GM12878 (cell line): ENCODE measurements at regions of chr3 and their contacts with region 1.

Region 1: GRCh38 chr3:138051946-138052802 is 42.2 kb downstream of the CLDN18 start:
- DNase-seq: no peak
- ATAC-seq: peak; percentile 96
- H3K4me3 ChIP-seq: no peak overlapping the region
- H3K27ac ChIP-seq: no peak overlapping the region
- H3K4me1 ChIP-seq: peaks cover 7% of the 10 kb centered on the region; the same call in 1 of the 2 replicates
- H3K27me3 ChIP-seq: no peaks in the 10 kb centered on the region
- CTCF ChIP-seq: peak; percentile 78 to 93 (median 83)
- EP300 ChIP-seq: no peak
- POLR2A ChIP-seq: no peak
- RAD21 ChIP-seq: peak; percentile 91

Region 2: GRCh38 chr3:137032465-137033120 is 1019.6 kb before region 1 on chr3:
- CTCF ChIA-PET with region 1: interaction called, 11 read pairs
- POLR2A ChIA-PET with region 1: no interaction called
- RAD21 ChIA-PET with region 1: interaction called, 3 read pairs
- SMC1A ChIA-PET with region 1: interaction called, 3 read pairs
- in situ Hi-C with region 1: no loop called
- intact Hi-C with region 1: no loop called
- DNase-seq: peak; percentile 13
- ATAC-seq: peak; percentile 97
- H3K4me3 ChIP-seq: peak overlapping the region; percentile 22; the same call in 1 of the 2 replicates
- H3K27ac ChIP-seq: no peak overlapping the region
- H3K4me1 ChIP-seq: no peaks in the 10 kb centered on the region
- H3K27me3 ChIP-seq: no peaks in the 10 kb centered on the region
- CTCF ChIP-seq: peak; percentile 96 to 100 (median 99)
- EP300 ChIP-seq: no peak
- POLR2A ChIP-seq: no peak
- RAD21 ChIP-seq: peak; percentile 95

Region 3: GRCh38 chr3:137110484-137110883 is 941.7 kb before region 1 on chr3:
- CTCF ChIA-PET with region 1: interaction called, 35 read pairs
- POLR2A ChIA-PET with region 1: no interaction called
- RAD21 ChIA-PET with region 1: interaction called, 22 read pairs
- SMC1A ChIA-PET with region 1: interaction called, 13 read pairs
- in situ Hi-C with region 1: no loop called
- intact Hi-C with region 1: loop called (anchors 1 kb)
- DNase-seq: no peak
- ATAC-seq: peak; percentile 85
- H3K4me3 ChIP-seq: no peak overlapping the region
- H3K27ac ChIP-seq: no peak overlapping the region
- H3K4me1 ChIP-seq: no peaks in the 10 kb centered on the region
- H3K27me3 ChIP-seq: no peaks in the 10 kb centered on the region; a peak in 1 of 4 replicates
- CTCF ChIP-seq: peak; percentile 68 to 89 (median 88)
- EP300 ChIP-seq: no peak
- POLR2A ChIP-seq: no peak
- RAD21 ChIP-seq: peak; percentile 95

Region 4: GRCh38 chr3:137714551-137714950 is 337.6 kb before region 1 on chr3:
- CTCF ChIA-PET with region 1: interaction called, 19 read pairs
- POLR2A ChIA-PET with region 1: no interaction called
- RAD21 ChIA-PET with region 1: interaction called, 18 read pairs
- SMC1A ChIA-PET with region 1: interaction called, 42 read pairs
- in situ Hi-C with region 1: loop called (anchors 10 kb)
- intact Hi-C with region 1: loop called (anchors 1 kb)
- DNase-seq: no peak
- ATAC-seq: no peak
- H3K4me3 ChIP-seq: no peak overlapping the region
- H3K27ac ChIP-seq: no peak overlapping the region
- H3K4me1 ChIP-seq: no peaks in the 10 kb centered on the region
- H3K27me3 ChIP-seq: no peaks in the 10 kb centered on the region; a peak in 1 of 4 replicates
- CTCF ChIP-seq: no peak
- EP300 ChIP-seq: no peak
- POLR2A ChIP-seq: no peak
- RAD21 ChIP-seq: no peak

Region 5: GRCh38 chr3:137906985-137907640 is 145.1 kb before region 1 on chr3:
- CTCF ChIA-PET with region 1: no interaction called
- POLR2A ChIA-PET with region 1: no interaction called
- RAD21 ChIA-PET with region 1: no interaction called
- SMC1A ChIA-PET with region 1: no interaction called
- in situ Hi-C with region 1: no loop called
- intact Hi-C with region 1: no loop called
- DNase-seq: no peak
- ATAC-seq: no peak
- H3K4me3 ChIP-seq: no peak overlapping the region
- H3K27ac ChIP-seq: no peak overlapping the region
- H3K4me1 ChIP-seq: no peaks in the 10 kb centered on the region
- H3K27me3 ChIP-seq: no peaks in the 10 kb centered on the region
- CTCF ChIP-seq: no peak
- EP300 ChIP-seq: no peak
- POLR2A ChIP-seq: no peak
- RAD21 ChIP-seq: no peak

Region 6: GRCh38 chr3:137946345-137946973 is 105.7 kb before region 1 on chr3:
- CTCF ChIA-PET with region 1: interaction called, 45 read pairs
- POLR2A ChIA-PET with region 1: no interaction called
- RAD21 ChIA-PET with region 1: interaction called, 23 read pairs
- SMC1A ChIA-PET with region 1: interaction called, 5 read pairs
- in situ Hi-C with region 1: no loop called
- intact Hi-C with region 1: loop called (anchors 1 kb)
- DNase-seq: no peak
- ATAC-seq: peak; percentile 93
- H3K4me3 ChIP-seq: no peak overlapping the region
- H3K27ac ChIP-seq: no peak overlapping the region
- H3K4me1 ChIP-seq: no peaks in the 10 kb centered on the region
- H3K27me3 ChIP-seq: no peaks in the 10 kb centered on the region
- CTCF ChIP-seq: peak; percentile 65 to 69 (median 68); a peak in 5 of 6 replicates
- EP300 ChIP-seq: no peak
- POLR2A ChIP-seq: no peak
- RAD21 ChIP-seq: peak; percentile 91

Region 7: DNA sequence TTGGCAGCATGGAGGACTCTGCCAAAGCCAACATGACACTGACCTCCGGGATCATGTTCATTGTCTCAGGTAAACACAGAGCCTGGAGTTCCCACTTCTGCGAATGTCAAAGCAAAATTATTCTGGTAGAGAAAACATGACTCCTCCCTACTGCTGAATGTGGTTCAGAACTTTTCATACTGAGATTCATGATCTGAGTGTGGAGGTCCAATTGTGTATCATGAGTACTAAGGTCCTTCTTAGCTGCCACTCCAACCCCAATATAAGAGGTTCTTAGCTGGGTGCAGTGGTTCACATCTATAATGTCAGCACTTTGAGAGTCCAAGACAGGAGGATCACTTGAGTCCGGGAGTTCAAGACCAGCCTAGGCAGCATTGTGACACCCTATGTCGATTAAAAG is 28.4 kb before region 1 on chr3:
- CTCF ChIA-PET with region 1: interaction called, 10 read pairs
- POLR2A ChIA-PET with region 1: no interaction called
- RAD21 ChIA-PET with region 1: interaction called, 3 read pairs
- SMC1A ChIA-PET with region 1: interaction called, 3 read pairs
- in situ Hi-C with region 1: no loop called
- intact Hi-C with region 1: no loop called
- DNase-seq: no peak
- ATAC-seq: peak; percentile 69
- H3K4me3 ChIP-seq: no peak overlapping the region
- H3K27ac ChIP-seq: peak overlapping the region; percentile 48
- H3K4me1 ChIP-seq: peaks cover 12% of the 10 kb centered on the region
- H3K27me3 ChIP-seq: no peaks in the 10 kb centered on the region
- CTCF ChIP-seq: no peak
- EP300 ChIP-seq: no peak
- POLR2A ChIP-seq: no peak
- RAD21 ChIP-seq: no peak

Region 8: DNA sequence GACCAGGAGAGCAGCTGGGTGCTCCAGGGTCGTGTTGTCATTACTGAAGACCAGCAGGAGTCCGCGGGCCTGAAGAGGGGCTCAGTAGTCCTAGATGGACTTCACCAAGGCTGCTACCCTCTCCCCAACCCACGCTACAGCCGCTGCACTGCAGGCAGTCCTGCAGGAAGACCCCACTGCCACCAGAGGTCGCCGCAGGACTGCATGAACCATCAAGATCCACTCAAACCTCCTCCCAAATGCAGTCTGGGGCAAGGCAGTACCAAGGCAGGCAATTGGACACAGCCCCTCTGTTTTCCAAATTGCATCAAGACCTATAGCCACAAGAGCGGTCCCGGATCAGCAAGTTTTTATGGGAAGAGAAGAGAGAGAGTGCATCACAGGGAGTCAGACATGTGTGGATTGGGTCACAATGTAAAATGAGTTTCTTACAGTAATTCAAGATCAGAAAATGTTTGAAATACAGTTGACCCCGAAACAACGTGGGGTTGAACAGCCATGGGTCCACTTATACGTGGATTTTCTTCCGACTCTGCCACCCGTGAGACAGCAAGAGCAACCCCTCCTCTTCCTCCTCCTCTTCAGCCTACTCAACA is 16.5 kb after region 1 on chr3:
- CTCF ChIA-PET with region 1: interaction called, 15 read pairs
- POLR2A ChIA-PET with region 1: interaction called, 3 read pairs
- RAD21 ChIA-PET with region 1: interaction called, 4 read pairs
- SMC1A ChIA-PET with region 1: interaction called, 3 read pairs
- in situ Hi-C with region 1: no loop called
- intact Hi-C with region 1: no loop called
- DNase-seq: no peak
- ATAC-seq: peak; percentile 91
- H3K4me3 ChIP-seq: no peak overlapping the region
- H3K27ac ChIP-seq: no peak overlapping the region
- H3K4me1 ChIP-seq: peaks cover 13% of the 10 kb centered on the region
- H3K27me3 ChIP-seq: peaks cover 0 to 2% of the 10 kb centered on the region in 2 experiments; a peak in 3 of 4 replicates
- CTCF ChIP-seq: peak; percentile 94 to 99 (median 98)
- EP300 ChIP-seq: no peak
- POLR2A ChIP-seq: no peak
- RAD21 ChIP-seq: peak; percentile 100

Region 9: GRCh38 chr3:138082085-138082991 is 30.2 kb after region 1 on chr3:
- CTCF ChIA-PET with region 1: no interaction called
- POLR2A ChIA-PET with region 1: no interaction called
- RAD21 ChIA-PET with region 1: no interaction called
- SMC1A ChIA-PET with region 1: no interaction called
- in situ Hi-C with region 1: no loop called
- intact Hi-C with region 1: no loop called
- DNase-seq: peak; percentile 27
- ATAC-seq: peak; percentile 77
- H3K4me3 ChIP-seq: no peak overlapping the region
- H3K27ac ChIP-seq: no peak overlapping the region
- H3K4me1 ChIP-seq: peaks cover 8% of the 10 kb centered on the region
- H3K27me3 ChIP-seq: peaks cover 0 to 2% of the 10 kb centered on the region in 2 experiments; a peak in 2 of 4 replicates
- CTCF ChIP-seq: no peak
- EP300 ChIP-seq: no peak
- POLR2A ChIP-seq: no peak
- RAD21 ChIP-seq: no peak